Calu3 (cell line): ENCODE measurements at regions of chr3 and their contacts with region 1.

Region 1: GRCh38 chr3:46208167-46208704 is at the start of gene CCR1:
- DNase-seq: peak; percentile 68
- H3K4me3 Mint-ChIP-seq: no peak within 1 kb of the TSS
- H3K27ac Mint-ChIP-seq: peak within 1 kb of the TSS; percentile 69
- H3K4me1 Mint-ChIP-seq: no peaks in the 10 kb centered on the region
- H3K27me3 Mint-ChIP-seq: no peaks in the 10 kb centered on the region
- CTCF ChIP-seq: peak; percentile 39
- total RNA-seq, gene CCR1: 0.87 and 2.2 TPM in 2 replicates

Region 2: GRCh38 chr3:45938864-45939263 is 269.4 kb before region 1 on chr3:
- CTCF ChIA-PET with region 1: interaction called, 7 read pairs
- intact Hi-C with region 1: loop called (anchors 5 kb)
- DNase-seq: peak; percentile 82
- H3K4me3 Mint-ChIP-seq: no peak overlapping the region
- H3K27ac Mint-ChIP-seq: no peak overlapping the region
- H3K4me1 Mint-ChIP-seq: peaks cover 8% of the 10 kb centered on the region
- H3K27me3 Mint-ChIP-seq: no peaks in the 10 kb centered on the region
- CTCF ChIP-seq: peak; percentile 54

Region 3: GRCh38 chr3:46089237-46090011 is 118.8 kb before region 1 on chr3:
- CTCF ChIA-PET with region 1: interaction called, 13 read pairs
- intact Hi-C with region 1: loop called (anchors 1 kb)
- DNase-seq: peak; percentile 35
- H3K4me3 Mint-ChIP-seq: no peak overlapping the region
- H3K27ac Mint-ChIP-seq: no peak overlapping the region
- H3K4me1 Mint-ChIP-seq: peaks cover 50% of the 10 kb centered on the region
- H3K27me3 Mint-ChIP-seq: no peaks in the 10 kb centered on the region
- CTCF ChIP-seq: no peak

Region 4: DNA sequence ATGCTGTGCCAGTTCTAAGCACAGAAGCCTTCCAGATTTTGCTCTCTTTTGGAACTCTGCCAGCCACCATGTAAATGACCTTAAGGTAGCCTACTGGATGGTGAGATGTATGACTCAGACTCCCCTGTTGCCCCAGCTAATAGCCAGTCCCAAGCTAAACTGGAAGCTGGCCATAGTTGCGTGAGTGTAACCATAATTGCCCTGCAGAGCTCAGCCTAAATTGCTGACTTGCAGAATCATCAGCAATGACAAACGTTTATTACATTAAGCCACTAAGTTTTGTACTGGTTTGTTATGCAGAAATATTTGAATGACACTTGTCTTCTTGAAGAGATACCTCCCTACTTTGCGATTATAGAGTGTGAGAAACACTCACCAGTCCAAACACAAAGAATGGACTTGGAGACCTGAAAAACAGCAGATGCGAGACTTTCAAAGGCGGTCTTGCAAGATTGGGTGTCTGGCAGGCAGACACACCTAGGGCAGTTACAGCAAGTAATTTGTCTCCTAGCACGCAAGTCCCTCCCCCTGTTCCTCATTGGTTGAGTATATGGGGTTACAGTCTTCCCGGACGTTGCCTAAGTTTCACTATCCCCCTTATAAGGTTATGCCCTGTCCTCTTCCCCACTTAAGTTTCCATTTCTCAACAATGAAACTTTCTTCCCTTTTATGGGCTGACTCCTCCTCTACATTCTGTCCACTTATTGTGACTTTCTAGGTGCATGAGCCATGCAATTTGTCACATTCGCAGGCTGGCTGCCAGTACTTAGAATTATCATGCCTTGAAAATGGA is 97.3 kb before region 1 on chr3:
- CTCF ChIA-PET with region 1: interaction called, 9 read pairs
- intact Hi-C with region 1: loop called (anchors 1 kb)
- DNase-seq: peak; percentile 79
- H3K4me3 Mint-ChIP-seq: peak overlapping the region; percentile 58
- H3K27ac Mint-ChIP-seq: peak overlapping the region; percentile 69
- H3K4me1 Mint-ChIP-seq: peaks cover 64% of the 10 kb centered on the region
- H3K27me3 Mint-ChIP-seq: no peaks in the 10 kb centered on the region
- CTCF ChIP-seq: no peak